Heart left ventricle (tissue), 16 donors: ENCODE measurements at regions of chr17 and their contacts with region 1.

Region 1: DNA sequence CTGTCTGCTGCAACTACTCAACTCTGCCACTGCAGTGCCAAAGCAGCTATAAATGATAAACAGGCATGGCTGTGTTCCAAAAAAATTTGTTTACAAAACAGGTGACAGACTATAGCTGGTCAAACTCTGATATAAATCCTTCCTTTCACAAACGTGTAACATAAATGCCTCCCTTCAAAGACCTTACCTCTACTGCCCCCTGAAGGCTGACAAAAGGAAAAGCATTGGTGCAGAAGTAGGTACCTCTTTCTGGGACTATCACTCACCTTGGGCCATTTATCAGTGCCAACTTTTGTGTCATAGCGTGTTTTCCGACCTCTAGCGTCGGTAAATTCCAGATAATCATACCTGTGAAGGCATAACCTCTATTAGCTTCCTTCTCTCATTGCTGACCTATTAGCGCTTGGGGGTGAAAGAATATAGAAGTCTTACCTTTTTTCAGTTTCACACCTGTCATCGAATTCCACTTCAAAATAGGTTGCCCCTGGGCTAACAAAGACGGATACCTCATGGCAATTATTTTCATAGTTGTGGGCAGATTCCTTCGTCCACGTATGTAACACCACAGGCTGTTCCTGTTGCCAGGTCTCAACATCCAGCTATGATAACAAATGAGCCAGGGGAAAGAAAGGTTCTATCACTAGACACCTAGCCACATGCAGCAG is 67.9 kb downstream of the ZZEF1 start:
- DNase-seq: no peak
- ATAC-seq: peak in 3 of 4 donors; percentile 52 to 61 (median 54)
- H3K4me3 ChIP-seq: no peak overlapping the region
- H3K27ac ChIP-seq: peak overlapping the region in 1 of 12 donors; percentile 54
- H3K4me1 ChIP-seq: peaks cover 0 to 17% (median 0%) of the 10 kb centered on the region in 12 donors
- H3K27me3 ChIP-seq: no peaks in the 10 kb centered on the region
- CTCF ChIP-seq: peak in 11 of 12 donors; percentile 36 to 70 (median 58)
- POLR2A ChIP-seq: no peak

Region 2: GRCh38 chr17:3738562-3739295 is 336.2 kb before region 1 on chr17:
- intact Hi-C with region 1: loop called in 3 of 10 experiments (anchors 10 kb)
- DNase-seq: no peak
- ATAC-seq: peak in 3 of 4 donors; percentile 47 to 64 (median 52)
- H3K4me3 ChIP-seq: peak overlapping the region in 2 of 12 donors; percentile 46 to 49
- H3K27ac ChIP-seq: peak overlapping the region in 2 of 12 donors; percentile 15 to 48
- H3K4me1 ChIP-seq: peaks cover 0 to 13% (median 6%) of the 10 kb centered on the region in 12 donors
- H3K27me3 ChIP-seq: peaks cover 0 to 8% (median 0%) of the 10 kb centered on the region in 9 donors
- CTCF ChIP-seq: no peak
- POLR2A ChIP-seq: no peak

Region 3: DNA sequence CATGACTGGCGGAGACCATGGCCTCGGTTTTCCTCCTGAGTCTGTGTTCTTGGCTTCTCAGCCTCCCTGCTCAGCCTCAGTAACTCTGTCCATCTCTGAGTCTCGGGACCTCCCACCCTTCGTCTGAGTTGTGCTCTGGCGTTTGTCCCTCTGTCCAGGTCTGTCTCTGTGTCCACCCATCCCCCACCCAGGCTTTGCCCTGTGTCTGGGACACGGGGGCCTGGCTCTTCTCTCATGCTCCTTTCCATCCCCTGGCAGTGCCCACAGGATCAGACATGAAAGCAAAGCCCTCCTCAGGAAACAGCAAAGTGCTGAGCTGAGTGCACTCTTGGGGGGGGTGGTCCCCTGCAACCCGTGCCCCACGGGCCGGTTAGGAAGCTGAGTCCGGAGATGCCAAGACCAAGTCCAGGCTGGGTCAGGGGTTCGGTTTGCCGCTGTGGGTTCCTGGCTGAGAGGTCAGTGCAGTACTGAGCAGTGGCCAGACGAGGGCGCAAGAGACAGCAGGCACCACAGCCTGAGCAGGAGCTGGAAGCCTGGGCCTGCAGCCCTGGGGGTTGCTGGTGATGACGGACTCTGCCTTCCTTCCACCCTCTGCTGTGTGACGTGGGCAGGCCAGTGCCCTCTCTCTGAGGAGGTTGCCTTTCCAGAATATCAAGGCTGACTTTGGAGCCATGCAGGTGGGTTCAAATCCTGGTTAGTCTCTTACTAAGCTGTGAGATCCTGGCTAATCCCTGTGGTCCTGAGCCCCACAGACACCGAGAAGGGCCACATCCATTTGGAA is 161.2 kb before region 1 on chr17:
- intact Hi-C with region 1: loop called in 6 of 10 experiments (anchors 5 to 10 kb)
- DNase-seq: peak; percentile 77 to 88 (median 83)
- ATAC-seq: peak; percentile 56 to 79 (median 70)
- H3K4me3 ChIP-seq: peak overlapping the region in 2 of 12 donors; percentile 12 to 53
- H3K27ac ChIP-seq: peak overlapping the region in 3 of 12 donors; percentile 9 to 79 (median 41)
- H3K4me1 ChIP-seq: peaks cover 3 to 52% (median 31%) of the 10 kb centered on the region in 12 donors
- H3K27me3 ChIP-seq: no peaks in the 10 kb centered on the region
- CTCF ChIP-seq: peak; percentile 92 to 99 (median 96)
- POLR2A ChIP-seq: no peak

Region 4: DNA sequence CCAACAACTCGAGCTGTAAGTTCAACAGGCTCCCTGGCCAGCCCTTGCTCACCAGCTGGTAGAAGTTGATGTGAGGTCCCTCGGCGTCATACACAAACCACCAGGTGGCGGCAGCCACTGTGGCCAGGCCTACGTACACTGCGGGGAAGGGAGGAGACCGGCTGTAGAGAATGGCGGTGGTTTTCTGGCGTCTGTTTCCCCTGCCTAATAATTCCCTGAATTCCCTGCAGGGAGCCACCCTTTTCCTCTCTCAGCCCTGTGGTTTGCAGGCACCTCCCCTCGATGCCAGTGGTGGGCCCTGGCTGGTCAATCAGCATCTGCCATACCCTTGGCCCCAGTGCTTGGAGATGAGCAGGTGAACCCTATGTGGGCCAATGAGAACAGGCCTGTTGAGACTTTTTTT is 139.8 kb before region 1 on chr17:
- intact Hi-C with region 1: loop called in 3 of 10 experiments (anchors 5 kb)
- DNase-seq: peak in 4 of 5 donors; percentile 73 to 83 (median 78)
- ATAC-seq: peak; percentile 87 to 98 (median 96)
- H3K4me3 ChIP-seq: no peak overlapping the region
- H3K27ac ChIP-seq: no peak overlapping the region
- H3K4me1 ChIP-seq: peaks cover 0 to 6% (median 0%) of the 10 kb centered on the region in 12 donors
- H3K27me3 ChIP-seq: no peaks in the 10 kb centered on the region
- CTCF ChIP-seq: peak; percentile 60 to 82 (median 72)
- POLR2A ChIP-seq: no peak

Region 5: DNA sequence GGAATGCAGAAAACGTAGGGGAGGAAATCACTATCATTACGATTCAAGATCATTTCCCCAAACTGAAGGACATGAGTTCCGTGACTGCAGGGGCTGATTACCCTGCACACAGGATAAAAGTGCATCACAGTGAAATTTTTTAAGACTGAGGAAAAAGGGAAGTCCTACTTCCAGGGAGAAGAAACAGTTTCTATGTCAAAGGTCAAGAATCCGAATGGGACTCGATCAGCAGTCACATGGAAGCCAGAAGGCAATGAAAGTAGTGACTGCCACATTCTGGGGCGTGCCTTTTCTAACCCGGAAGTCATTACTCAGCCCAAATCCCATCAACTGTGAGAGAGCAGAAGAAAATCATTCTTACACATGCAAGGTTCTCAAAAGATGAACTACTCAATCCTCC is 55.8 kb after region 1 on chr17:
- intact Hi-C with region 1: loop called in 1 of 10 experiments (anchors 10 kb)
- DNase-seq: peak in 3 of 5 donors; percentile 31 to 44 (median 38)
- ATAC-seq: peak; percentile 22 to 78 (median 66)
- H3K4me3 ChIP-seq: peak overlapping the region in 1 of 12 donors; percentile 18
- H3K27ac ChIP-seq: peak overlapping the region in 9 of 12 donors; percentile 2 to 86 (median 39)
- H3K4me1 ChIP-seq: peaks cover 0 to 62% (median 17%) of the 10 kb centered on the region in 12 donors
- H3K27me3 ChIP-seq: no peaks in the 10 kb centered on the region
- CTCF ChIP-seq: no peak
- POLR2A ChIP-seq: peak in 1 of 2 donors; percentile 14